Colonic mucosa (tissue), 4 donors: ENCODE measurements at regions of chr4 and their contacts with region 1.

Region 1: DNA sequence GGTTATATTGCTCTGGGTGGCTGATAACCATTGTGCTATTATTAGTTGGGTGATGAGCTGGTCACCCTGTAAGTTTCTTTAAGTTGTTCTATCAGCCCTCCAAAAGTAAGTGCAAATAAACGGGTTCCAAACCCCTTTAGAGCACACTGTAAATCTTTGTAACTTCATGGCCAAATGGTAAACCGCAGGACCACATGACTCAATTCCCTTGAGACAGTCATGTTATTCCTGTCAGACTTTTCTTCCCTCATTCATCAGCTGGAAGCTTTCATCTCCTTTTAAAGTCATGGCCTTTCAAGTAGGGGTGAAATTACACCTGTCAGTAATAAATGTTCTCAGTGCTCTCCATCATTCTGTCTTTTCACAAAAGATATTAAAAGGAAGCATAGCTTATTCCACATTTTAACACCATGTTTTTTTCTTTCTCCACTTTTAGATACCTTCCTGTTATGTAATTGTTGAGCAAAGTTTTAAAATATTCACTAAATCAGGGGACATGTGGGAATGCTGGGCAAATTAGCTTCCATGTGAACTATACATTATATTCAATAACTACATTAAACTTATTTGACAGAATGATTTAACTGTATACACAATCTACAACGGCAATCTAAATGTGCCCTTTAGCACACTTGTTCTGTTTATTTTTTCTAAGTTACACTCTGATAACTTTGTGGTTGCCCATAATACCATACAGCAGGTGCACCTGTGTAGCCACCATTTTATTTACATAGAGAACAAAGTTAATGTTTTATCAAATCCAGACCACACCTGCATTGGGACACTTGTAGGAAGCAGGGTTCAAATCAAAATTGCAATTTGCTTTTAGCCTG is 275.5 kb downstream of the CFAP299 start:
- DNase-seq: peak; percentile 34
- H3K4me3 ChIP-seq: no peak overlapping the region
- H3K27ac ChIP-seq: peak overlapping the region; percentile 14
- H3K4me1 ChIP-seq: no peaks in the 10 kb centered on the region
- H3K27me3 ChIP-seq: no peaks in the 10 kb centered on the region
- CTCF ChIP-seq: no peak

Region 2: GRCh38 chr4:81040012-81040659 is 429.1 kb after region 1 on chr4:
- intact Hi-C with region 1: loop called (anchors 10 kb)
- DNase-seq: no peak
- H3K4me3 ChIP-seq: no peak overlapping the region
- H3K27ac ChIP-seq: no peak overlapping the region
- H3K4me1 ChIP-seq: no peaks in the 10 kb centered on the region
- H3K27me3 ChIP-seq: no peaks in the 10 kb centered on the region
- CTCF ChIP-seq: peak; percentile 61